Natural killer cell (primary cell): ENCODE measurements at regions of chr4 and their contacts with region 1.

Region 1: GRCh38 chr4:70601422-70602039 is 9.5 kb downstream of the AMBN start:
- DNase-seq: peak; percentile 37 to 82
- ATAC-seq: peak; percentile 84 to 89 (median 88)
- H3K4me3 ChIP-seq: no peak overlapping the region
- H3K4me3 Mint-ChIP-seq: no peak overlapping the region
- H3K27ac ChIP-seq: no peak overlapping the region
- H3K27ac Mint-ChIP-seq: no peak overlapping the region
- H3K4me1 ChIP-seq: no peaks in the 10 kb centered on the region
- H3K4me1 Mint-ChIP-seq: no peaks in the 10 kb centered on the region
- H3K27me3 ChIP-seq: no peaks in the 10 kb centered on the region
- H3K27me3 Mint-ChIP-seq: peaks cover 0 to 6% of the 10 kb centered on the region in 2 donors
- CTCF ChIP-seq: peak; percentile 63

Region 2: GRCh38 chr4:70099206-70099605 is 502.3 kb before region 1 on chr4:
- intact Hi-C with region 1: no loop called
- DNase-seq: no peak
- ATAC-seq: no peak
- H3K4me3 ChIP-seq: no peak overlapping the region
- H3K4me3 Mint-ChIP-seq: no peak overlapping the region
- H3K27ac ChIP-seq: no peak overlapping the region
- H3K27ac Mint-ChIP-seq: no peak overlapping the region
- H3K4me1 ChIP-seq: no peaks in the 10 kb centered on the region
- H3K4me1 Mint-ChIP-seq: no peaks in the 10 kb centered on the region
- H3K27me3 ChIP-seq: no peaks in the 10 kb centered on the region
- H3K27me3 Mint-ChIP-seq: no peaks in the 10 kb centered on the region
- CTCF ChIP-seq: no peak

Region 3: GRCh38 chr4:70637239-70637913 is 35.8 kb after region 1 on chr4:
- intact Hi-C with region 1: no loop called
- DNase-seq: no peak
- ATAC-seq: no peak
- H3K4me3 ChIP-seq: no peak overlapping the region
- H3K4me3 Mint-ChIP-seq: no peak overlapping the region
- H3K27ac ChIP-seq: no peak overlapping the region
- H3K27ac Mint-ChIP-seq: no peak overlapping the region
- H3K4me1 ChIP-seq: no peaks in the 10 kb centered on the region
- H3K4me1 Mint-ChIP-seq: no peaks in the 10 kb centered on the region
- H3K27me3 ChIP-seq: no peaks in the 10 kb centered on the region
- H3K27me3 Mint-ChIP-seq: peaks cover 3 to 13% of the 10 kb centered on the region in 2 donors
- CTCF ChIP-seq: no peak

Region 4: GRCh38 chr4:71009890-71010588 is 408.5 kb after region 1 on chr4:
- intact Hi-C with region 1: loop called (anchors 2 kb)
- DNase-seq: peak in 1 of 2 donors; percentile 75
- ATAC-seq: peak in 2 of 3 donors; percentile 76
- H3K4me3 ChIP-seq: no peak overlapping the region
- H3K4me3 Mint-ChIP-seq: no peak overlapping the region
- H3K27ac ChIP-seq: no peak overlapping the region
- H3K27ac Mint-ChIP-seq: peak overlapping the region; percentile 71 to 77
- H3K4me1 ChIP-seq: peaks cover 14% of the 10 kb centered on the region
- H3K4me1 Mint-ChIP-seq: peaks cover 48 to 55% of the 10 kb centered on the region in 2 donors
- H3K27me3 ChIP-seq: no peaks in the 10 kb centered on the region
- H3K27me3 Mint-ChIP-seq: no peaks in the 10 kb centered on the region
- CTCF ChIP-seq: peak; percentile 88